ENCODE measurements at regions of chr19 and their contacts with region 1.

Region 1: DNA sequence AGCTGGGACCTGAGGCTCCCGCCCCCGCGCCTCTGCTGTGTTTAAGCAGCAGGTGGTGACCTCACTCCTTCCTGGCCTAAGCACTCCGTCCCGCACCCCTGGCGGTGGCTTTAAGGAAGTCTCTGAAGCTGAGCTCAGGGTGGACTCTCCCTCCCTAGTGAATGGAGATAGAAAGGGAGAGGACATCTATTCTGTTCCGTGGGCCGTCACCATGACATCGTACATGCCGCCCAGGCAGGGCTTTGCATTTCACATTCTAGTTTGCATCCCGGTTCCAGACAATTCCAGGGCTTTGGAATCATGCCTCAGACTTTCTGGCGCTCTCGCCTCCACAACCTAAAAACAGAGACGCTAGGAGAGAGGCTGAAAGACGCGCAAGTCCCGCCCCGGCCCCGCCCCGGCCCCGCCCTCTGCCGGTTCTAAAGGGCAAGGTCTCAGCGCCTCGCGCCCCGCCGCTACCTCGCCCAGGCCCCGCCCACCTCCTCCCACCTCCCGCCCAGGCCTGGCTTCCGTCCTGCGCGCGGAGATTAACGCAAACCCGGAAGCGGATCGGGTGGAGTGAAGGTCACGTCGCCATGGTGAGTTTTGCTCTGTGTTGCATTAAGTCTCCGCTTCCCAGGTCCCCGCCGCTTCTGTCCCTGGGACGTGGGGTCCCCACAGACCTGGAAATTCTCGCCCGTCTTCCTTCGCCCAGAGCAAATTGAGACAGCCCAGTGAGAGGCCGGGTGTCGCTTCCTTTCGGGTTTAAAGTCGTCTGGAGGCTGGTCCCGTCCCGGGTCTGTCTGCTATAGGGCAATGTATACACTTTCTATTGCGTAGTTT is at the start of gene ZNF808:
- DNase-seq: peak; percentile 99
- H3K4me3 Mint-ChIP-seq: peak within 1 kb of the TSS; percentile 96
- H3K27ac Mint-ChIP-seq: peak within 1 kb of the TSS; percentile 92
- H3K4me1 Mint-ChIP-seq: peaks cover 18% of the 10 kb centered on the region
- H3K27me3 Mint-ChIP-seq: no peaks in the 10 kb centered on the region
- total RNA-seq, gene ZNF808: 31.8 to 32.9 TPM

Region 2: DNA sequence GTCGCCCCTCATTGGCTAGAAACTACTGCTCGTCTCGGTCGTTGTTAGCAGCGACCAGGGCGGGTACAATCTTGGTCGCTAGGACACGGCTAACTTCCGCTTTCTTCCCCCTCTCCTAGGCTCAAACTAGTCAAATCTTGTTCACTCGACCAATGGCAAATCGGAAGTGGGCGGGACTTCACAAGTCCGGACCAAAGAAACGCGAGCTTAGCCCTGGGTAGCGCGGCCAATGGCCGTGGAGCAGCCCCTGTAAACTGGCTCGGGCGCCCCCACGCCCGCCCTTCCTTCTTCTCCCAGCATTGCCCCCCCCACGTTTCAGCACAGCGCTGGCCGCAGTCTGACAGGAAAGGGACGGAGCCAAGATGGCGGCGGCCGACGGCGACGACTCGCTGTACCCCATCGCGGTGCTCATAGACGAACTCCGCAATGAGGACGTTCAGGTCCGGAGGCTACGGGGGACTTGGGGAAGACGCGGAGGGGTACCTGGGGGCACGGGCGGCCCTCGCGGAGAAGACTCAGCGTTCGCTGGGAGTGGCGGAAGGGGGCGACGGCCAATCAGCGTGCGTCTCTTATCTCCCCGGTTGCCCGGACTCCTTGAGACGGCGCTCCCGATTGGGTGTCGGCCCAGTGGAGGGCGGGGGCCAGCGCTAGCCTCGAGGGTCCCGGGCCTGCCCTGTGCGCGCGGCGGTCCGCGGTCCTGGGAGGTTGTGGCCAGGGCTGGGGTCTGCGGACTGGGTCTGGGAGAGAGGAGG is 337.4 kb before region 1 on chr19 and contains the start of gene PPP2R1A:
- CTCF ChIA-PET with region 1: no interaction called
- POLR2A ChIA-PET with region 1: no interaction called
- intact Hi-C with region 1: loop called (anchors 5 kb)
- DNase-seq: peak; percentile 98
- H3K4me3 Mint-ChIP-seq: peak within 1 kb of the TSS; percentile 96
- H3K27ac Mint-ChIP-seq: peak within 1 kb of the TSS; percentile 99
- H3K4me1 Mint-ChIP-seq: peaks cover 41% of the 10 kb centered on the region
- H3K27me3 Mint-ChIP-seq: no peaks in the 10 kb centered on the region
- total RNA-seq, gene PPP2R1A: 224 to 229 TPM

Region 3: GRCh38 chr19:52343548-52343947 is 183.8 kb before region 1 on chr19:
- CTCF ChIA-PET with region 1: no interaction called
- POLR2A ChIA-PET with region 1: no interaction called
- intact Hi-C with region 1: loop called (anchors 2 kb)
- DNase-seq: peak; percentile 70
- H3K4me3 Mint-ChIP-seq: no peak overlapping the region
- H3K27ac Mint-ChIP-seq: no peak overlapping the region
- H3K4me1 Mint-ChIP-seq: peaks cover 2% of the 10 kb centered on the region
- H3K27me3 Mint-ChIP-seq: no peaks in the 10 kb centered on the region

Region 4: GRCh38 chr19:52570000-52570861 is 42.9 kb after region 1 on chr19 and contains the start of gene ZNF701:
- CTCF ChIA-PET with region 1: no interaction called
- POLR2A ChIA-PET with region 1: no interaction called
- intact Hi-C with region 1: loop called (anchors 1 kb)
- DNase-seq: peak; percentile 98
- H3K4me3 Mint-ChIP-seq: peak within 1 kb of the TSS; percentile 88
- H3K27ac Mint-ChIP-seq: peak within 1 kb of the TSS; percentile 92
- H3K4me1 Mint-ChIP-seq: peaks cover 31% of the 10 kb centered on the region
- H3K27me3 Mint-ChIP-seq: no peaks in the 10 kb centered on the region
- total RNA-seq, gene ZNF701: 19.9 to 22.7 TPM

Region 5: DNA sequence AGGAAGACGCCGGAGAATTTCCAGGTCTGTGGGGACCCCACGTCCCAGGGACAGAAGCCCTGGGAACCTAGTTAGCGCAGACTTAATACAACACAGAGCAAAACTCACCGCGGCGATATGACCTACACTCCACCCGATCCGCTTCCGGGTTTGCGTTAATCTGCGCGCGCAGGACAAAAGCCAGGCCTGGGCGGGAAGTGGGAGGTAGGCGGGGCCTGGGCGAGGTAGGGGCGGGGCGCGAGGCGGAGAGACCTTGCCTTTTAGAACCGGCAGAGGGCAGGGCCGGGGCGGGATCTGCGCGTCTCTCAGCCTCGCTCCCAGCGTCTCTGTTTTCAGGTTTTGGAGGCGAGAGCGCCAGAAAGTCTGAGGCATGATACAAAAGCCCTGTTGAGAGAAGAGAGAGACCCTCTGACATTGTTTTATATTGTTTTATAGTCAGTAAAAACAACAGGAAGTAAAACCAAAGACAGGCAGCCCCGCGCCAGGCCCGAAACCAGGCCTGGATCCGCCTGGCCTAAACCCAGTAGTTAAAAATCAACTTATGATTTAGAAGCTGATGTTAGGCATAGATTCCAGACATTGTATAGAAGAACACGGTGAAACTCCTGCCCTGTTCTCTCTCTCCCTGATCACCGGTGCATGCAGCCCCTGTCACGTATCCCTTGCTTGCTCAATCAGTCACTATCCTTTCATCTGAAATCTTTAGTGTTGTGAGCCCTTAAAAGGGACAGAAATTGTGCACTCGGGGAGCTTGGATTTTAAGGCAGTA is 207.7 kb after region 1 on chr19 and contains the start of gene ZNF611:
- CTCF ChIA-PET with region 1: no interaction called
- POLR2A ChIA-PET with region 1: no interaction called
- intact Hi-C with region 1: loop called (anchors 2 kb)
- DNase-seq: peak; percentile 99
- H3K4me3 Mint-ChIP-seq: peak within 1 kb of the TSS; percentile 76
- H3K27ac Mint-ChIP-seq: peak within 1 kb of the TSS; percentile 89
- H3K4me1 Mint-ChIP-seq: peaks cover 26% of the 10 kb centered on the region
- H3K27me3 Mint-ChIP-seq: no peaks in the 10 kb centered on the region
- total RNA-seq, gene ZNF611: 17.9 to 20.3 TPM

Region 6: GRCh38 chr19:53158119-53158656 is 630.8 kb after region 1 on chr19:
- CTCF ChIA-PET with region 1: no interaction called
- POLR2A ChIA-PET with region 1: no interaction called
- intact Hi-C with region 1: loop called (anchors 2 kb)
- DNase-seq: peak; percentile 62
- H3K4me3 Mint-ChIP-seq: peak overlapping the region; percentile 81
- H3K27ac Mint-ChIP-seq: peak overlapping the region; percentile 80
- H3K4me1 Mint-ChIP-seq: peaks cover 15% of the 10 kb centered on the region
- H3K27me3 Mint-ChIP-seq: no peaks in the 10 kb centered on the region